ENCODE measurements at regions of chr1 and their contacts with region 1.

Region 1: DNA sequence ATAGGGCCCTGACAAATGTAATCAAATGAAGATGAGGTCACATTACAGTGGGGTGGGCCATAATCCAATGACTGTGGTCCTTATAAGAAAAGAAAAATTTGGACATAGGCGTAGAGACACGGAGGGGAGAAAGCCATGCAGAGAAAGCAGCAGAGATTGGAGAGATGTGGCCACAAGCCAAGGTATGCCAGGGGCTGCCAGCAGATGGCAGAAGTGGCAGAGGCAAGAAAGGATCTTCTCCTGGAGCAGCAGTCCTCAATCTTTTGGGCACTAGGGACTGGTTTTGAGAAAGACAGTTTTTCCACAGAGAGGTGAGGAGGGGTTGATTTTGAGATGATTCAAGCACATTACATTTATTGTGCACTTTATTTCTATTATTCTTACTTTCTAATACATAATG is 355.1 kb downstream of the NPHP4 start:
- DNase-seq: no peak
- ATAC-seq: no peak
- H3K4me3 ChIP-seq: no peak overlapping the region
- H3K27ac ChIP-seq: no peak overlapping the region
- H3K4me1 ChIP-seq: no peaks in the 10 kb centered on the region
- H3K27me3 ChIP-seq: no peaks in the 10 kb centered on the region
- CTCF ChIP-seq: peak; percentile 24 to 35 (median 31); a peak in 4 of 6 replicates
- EP300 ChIP-seq: no peak
- POLR2A ChIP-seq: no peak
- RAD21 ChIP-seq: no peak; the same call in 1 of the 2 replicates

Region 2: GRCh38 chr1:5745776-5746610 is 108.8 kb after region 1 on chr1:
- CTCF ChIA-PET with region 1: no interaction called
- POLR2A ChIA-PET with region 1: no interaction called
- RAD21 ChIA-PET with region 1: no interaction called
- SMC1A ChIA-PET with region 1: no interaction called
- in situ Hi-C with region 1: no loop called
- intact Hi-C with region 1: loop called (anchors 5 kb)
- DNase-seq: no peak
- ATAC-seq: peak; percentile 98
- H3K4me3 ChIP-seq: no peak overlapping the region
- H3K27ac ChIP-seq: no peak overlapping the region
- H3K4me1 ChIP-seq: no peaks in the 10 kb centered on the region
- H3K27me3 ChIP-seq: peaks cover 0 to 2% of the 10 kb centered on the region in 2 experiments; a peak in 1 of 4 replicates
- CTCF ChIP-seq: peak; percentile 94 to 97 (median 96)
- EP300 ChIP-seq: no peak
- POLR2A ChIP-seq: no peak
- RAD21 ChIP-seq: peak; percentile 86